Stomach (tissue), 19 donors: ENCODE measurements at regions of chr2 and their contacts with region 1.

Region 1: GRCh38 chr2:186641807-186642321 is 52.0 kb upstream of the FAM171B start:
- DNase-seq: peak in 1 of 2 donors; percentile 88
- H3K4me3 ChIP-seq: no peak overlapping the region
- H3K27ac ChIP-seq: peak overlapping the region in 2 of 5 donors; percentile 11 to 51
- H3K4me1 ChIP-seq: peaks cover 0 to 14% (median 0%) of the 10 kb centered on the region in 4 donors
- H3K27me3 ChIP-seq: no peaks in the 10 kb centered on the region
- CTCF ChIP-seq: peak in 5 of 7 experiments; percentile 20 to 67 (median 51)
- EP300 ChIP-seq: no peak
- POLR2A ChIP-seq: no peak

Region 2: GRCh38 chr2:186503848-186504606 is 137.8 kb before region 1 on chr2:
- intact Hi-C with region 1: loop called (anchors 5 kb)
- DNase-seq: peak in 1 of 2 donors; percentile 37
- H3K4me3 ChIP-seq: no peak overlapping the region
- H3K27ac ChIP-seq: peak overlapping the region in 1 of 5 donors; percentile 1
- H3K4me1 ChIP-seq: peaks cover 0 to 15% (median 4%) of the 10 kb centered on the region in 4 donors
- H3K27me3 ChIP-seq: no peaks in the 10 kb centered on the region
- CTCF ChIP-seq: peak in 5 of 7 experiments; percentile 38 to 62 (median 54)
- EP300 ChIP-seq: no peak
- POLR2A ChIP-seq: no peak

Region 3: GRCh38 chr2:186862869-186863709 is 221.2 kb after region 1 on chr2:
- intact Hi-C with region 1: no loop called
- DNase-seq: peak in 1 of 2 donors; percentile 54
- H3K4me3 ChIP-seq: no peak overlapping the region
- H3K27ac ChIP-seq: no peak overlapping the region
- H3K4me1 ChIP-seq: no peaks in the 10 kb centered on the region
- H3K27me3 ChIP-seq: no peaks in the 10 kb centered on the region
- CTCF ChIP-seq: peak in 4 of 7 experiments; percentile 14 to 71 (median 46)
- EP300 ChIP-seq: no peak
- POLR2A ChIP-seq: no peak